PC-9 (cell line): ENCODE measurements at regions of chr11 and their contacts with region 1.

Region 1: DNA sequence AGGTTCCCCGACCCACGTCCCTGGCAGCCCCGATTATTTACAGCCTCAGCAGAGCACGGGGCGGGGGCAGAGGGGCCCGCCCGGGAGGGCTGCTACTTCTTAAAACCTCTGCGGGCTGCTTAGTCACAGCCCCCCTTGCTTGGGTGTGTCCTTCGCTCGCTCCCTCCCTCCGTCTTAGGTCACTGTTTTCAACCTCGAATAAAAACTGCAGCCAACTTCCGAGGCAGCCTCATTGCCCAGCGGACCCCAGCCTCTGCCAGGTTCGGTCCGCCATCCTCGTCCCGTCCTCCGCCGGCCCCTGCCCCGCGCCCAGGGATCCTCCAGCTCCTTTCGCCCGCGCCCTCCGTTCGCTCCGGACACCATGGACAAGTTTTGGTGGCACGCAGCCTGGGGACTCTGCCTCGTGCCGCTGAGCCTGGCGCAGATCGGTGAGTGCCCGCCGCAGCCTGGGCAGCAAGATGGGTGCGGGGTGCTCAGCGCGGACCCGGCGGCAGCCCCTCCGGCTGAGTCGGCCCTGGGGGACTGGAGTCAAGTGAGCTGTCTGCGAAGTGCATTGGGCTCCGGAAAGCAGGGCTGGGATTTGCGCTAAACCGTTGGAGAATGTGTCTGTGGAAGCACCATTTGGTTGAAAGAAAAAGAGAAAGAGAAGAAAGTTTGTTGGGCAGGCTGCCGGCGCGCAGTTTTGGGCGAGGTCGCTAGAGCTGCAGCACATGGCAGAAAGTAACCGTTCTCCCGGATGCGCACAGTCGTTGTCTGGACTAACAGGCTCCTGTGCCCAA is at the start of gene CD44:
- DNase-seq: peak; percentile 72 to 84
- H3K4me3 ChIP-seq: peak within 1 kb of the TSS; percentile 70
- H3K27ac ChIP-seq: peak within 1 kb of the TSS; percentile 91
- H3K4me1 ChIP-seq: peaks cover 66% of the 10 kb centered on the region
- H3K27me3 ChIP-seq: no peaks in the 10 kb centered on the region
- CTCF ChIP-seq: no peak
- total RNA-seq, gene CD44: 775 and 872 TPM in 2 replicates

Region 2: DNA sequence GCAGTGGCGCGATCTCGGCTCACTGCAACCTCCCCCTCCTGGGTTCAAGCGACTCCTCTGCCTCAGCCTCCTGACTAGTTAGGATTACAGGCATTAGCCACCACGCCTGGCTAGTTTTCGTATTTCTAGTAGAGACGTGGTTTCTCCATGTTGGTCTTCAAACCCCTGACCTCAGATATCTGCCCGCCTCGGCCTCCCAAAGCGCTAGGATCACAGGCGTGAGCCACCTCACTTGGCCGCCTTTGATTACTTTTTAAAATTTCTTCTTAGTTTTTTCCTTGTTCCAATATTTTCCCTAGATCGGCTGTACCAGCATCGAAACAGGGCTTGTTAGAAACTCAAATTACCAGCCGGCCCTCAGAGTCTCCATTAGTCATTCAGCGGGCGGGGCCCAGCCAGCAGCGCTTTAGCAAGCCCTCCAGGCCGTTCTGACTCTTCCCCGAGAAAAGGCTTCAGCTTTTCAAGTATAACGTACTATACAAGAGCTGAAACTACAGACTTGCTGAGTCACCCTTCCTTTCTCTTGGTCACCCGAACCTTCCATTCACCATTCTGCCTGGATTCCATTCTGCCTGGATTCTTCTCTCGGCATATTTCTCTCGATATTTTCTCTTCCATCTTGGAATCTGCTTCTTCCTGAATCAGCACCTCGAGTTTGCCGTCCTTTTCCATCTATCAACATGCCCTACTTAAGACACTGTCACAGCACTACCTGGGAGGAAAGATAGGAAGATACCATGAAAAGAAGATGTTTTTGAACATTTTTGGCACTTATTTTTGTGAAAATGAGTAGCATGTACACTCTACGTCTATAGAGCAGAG is 1094.3 kb before region 1 on chr11:
- CTCF ChIA-PET with region 1: no interaction called
- POLR2A ChIA-PET with region 1: no interaction called
- intact Hi-C with region 1: loop called (anchors 5 kb)
- DNase-seq: peak; percentile 86 to 96
- H3K4me3 ChIP-seq: peak overlapping the region; percentile 49
- H3K27ac ChIP-seq: peak overlapping the region; percentile 97
- H3K4me1 ChIP-seq: peaks cover 20% of the 10 kb centered on the region
- H3K27me3 ChIP-seq: no peaks in the 10 kb centered on the region
- CTCF ChIP-seq: no peak

Region 3: GRCh38 chr11:34480314-34480713 is 658.8 kb before region 1 on chr11:
- CTCF ChIA-PET with region 1: no interaction called
- POLR2A ChIA-PET with region 1: no interaction called
- intact Hi-C with region 1: no loop called
- DNase-seq: peak in 1 of 2 experiments; percentile 60
- H3K4me3 ChIP-seq: no peak overlapping the region
- H3K27ac ChIP-seq: no peak overlapping the region
- H3K4me1 ChIP-seq: peaks cover 6% of the 10 kb centered on the region; the same call in 1 of the 2 replicates
- H3K27me3 ChIP-seq: no peaks in the 10 kb centered on the region
- CTCF ChIP-seq: no peak

Region 4: DNA sequence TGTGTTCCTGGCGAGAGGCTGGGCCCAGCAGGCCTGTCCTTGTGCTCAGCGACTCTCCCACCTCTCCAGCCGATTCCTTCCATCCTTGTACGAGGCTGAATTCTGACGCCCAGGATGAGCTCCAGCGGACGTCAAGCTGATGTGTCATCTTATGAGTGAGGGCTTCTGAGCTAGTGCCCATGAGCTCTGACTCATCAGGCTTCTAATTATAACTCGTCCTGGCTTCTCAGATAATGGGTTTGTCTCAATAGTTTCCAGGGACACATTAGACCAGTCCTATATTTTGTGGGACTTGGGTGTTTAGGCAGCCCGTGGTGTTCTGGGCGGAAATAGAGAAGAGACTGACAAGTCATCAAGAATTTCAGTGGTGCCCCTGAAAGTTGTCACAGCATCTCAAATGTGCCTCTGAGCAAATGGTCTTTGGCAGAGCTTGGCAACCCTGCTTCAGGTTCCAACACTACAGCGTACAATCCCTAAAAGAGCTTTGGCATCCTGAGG is 108.4 kb before region 1 on chr11:
- CTCF ChIA-PET with region 1: no interaction called
- POLR2A ChIA-PET with region 1: interaction called, 24 read pairs
- intact Hi-C with region 1: no loop called
- DNase-seq: peak; percentile 66 to 95
- H3K4me3 ChIP-seq: peak overlapping the region; percentile 8; the same call in 1 of the 2 replicates
- H3K27ac ChIP-seq: peak overlapping the region; percentile 85
- H3K4me1 ChIP-seq: peaks cover 49% of the 10 kb centered on the region
- H3K27me3 ChIP-seq: no peaks in the 10 kb centered on the region
- CTCF ChIP-seq: no peak

Region 5: GRCh38 chr11:35111161-35112055 is 27.7 kb before region 1 on chr11:
- CTCF ChIA-PET with region 1: no interaction called
- POLR2A ChIA-PET with region 1: interaction called, 10 read pairs
- intact Hi-C with region 1: loop called (anchors 1 kb)
- DNase-seq: peak; percentile 87 to 88
- H3K4me3 ChIP-seq: no peak overlapping the region
- H3K27ac ChIP-seq: peak overlapping the region; percentile 82
- H3K4me1 ChIP-seq: peaks cover 43% of the 10 kb centered on the region
- H3K27me3 ChIP-seq: no peaks in the 10 kb centered on the region
- CTCF ChIP-seq: no peak